ENCODE measurements at regions of chr7 and their contacts with region 1.

Region 1: DNA sequence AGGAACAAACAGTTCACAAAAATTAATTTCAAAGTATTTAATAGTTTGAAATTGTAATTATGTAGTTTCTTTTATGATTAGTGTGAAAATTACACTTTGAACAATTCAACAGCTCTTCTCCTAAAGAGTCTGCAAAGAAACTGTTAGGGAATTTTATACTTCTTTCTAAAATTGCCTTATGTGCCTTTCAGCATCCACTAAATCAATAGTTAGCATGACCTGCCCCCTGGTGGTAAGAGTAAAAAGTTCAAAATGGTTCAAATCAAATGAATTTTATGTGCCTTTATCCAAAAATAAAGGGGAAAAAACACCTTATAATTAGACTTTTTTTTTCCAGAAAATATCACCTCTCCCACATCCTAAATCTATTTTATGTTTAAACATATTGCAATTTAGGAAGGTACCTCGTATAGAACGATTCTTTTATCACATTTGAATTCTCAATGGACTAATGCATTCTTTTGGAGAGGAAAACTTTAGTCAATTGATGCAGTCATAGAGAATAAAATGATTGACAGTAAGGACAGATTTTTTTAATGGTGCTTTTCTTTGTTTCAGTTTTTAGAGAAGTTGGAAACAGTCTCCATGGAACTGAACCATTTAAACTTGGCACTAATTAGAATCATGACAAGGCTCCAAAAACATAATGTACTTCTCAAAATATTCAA is 163.7 kb downstream of the SEMA3D start:
- DNase-seq: no peak
- CTCF ChIP-seq: peak; percentile 56

Region 2: GRCh38 chr7:83976295-83976694 is 1046.9 kb before region 1 on chr7:
- in situ Hi-C with region 1: loop called (anchors 10 kb)
- DNase-seq: peak; percentile 38
- CTCF ChIP-seq: peak; percentile 47

Region 3: GRCh38 chr7:84950836-84951235 is 72.3 kb before region 1 on chr7:
- in situ Hi-C with region 1: no loop called
- DNase-seq: no peak
- CTCF ChIP-seq: no peak

Measured in GM13976 (cell line).